WTC11 (cell line): ENCODE measurements at regions of chr4 and their contacts with region 1.

Region 1: DNA sequence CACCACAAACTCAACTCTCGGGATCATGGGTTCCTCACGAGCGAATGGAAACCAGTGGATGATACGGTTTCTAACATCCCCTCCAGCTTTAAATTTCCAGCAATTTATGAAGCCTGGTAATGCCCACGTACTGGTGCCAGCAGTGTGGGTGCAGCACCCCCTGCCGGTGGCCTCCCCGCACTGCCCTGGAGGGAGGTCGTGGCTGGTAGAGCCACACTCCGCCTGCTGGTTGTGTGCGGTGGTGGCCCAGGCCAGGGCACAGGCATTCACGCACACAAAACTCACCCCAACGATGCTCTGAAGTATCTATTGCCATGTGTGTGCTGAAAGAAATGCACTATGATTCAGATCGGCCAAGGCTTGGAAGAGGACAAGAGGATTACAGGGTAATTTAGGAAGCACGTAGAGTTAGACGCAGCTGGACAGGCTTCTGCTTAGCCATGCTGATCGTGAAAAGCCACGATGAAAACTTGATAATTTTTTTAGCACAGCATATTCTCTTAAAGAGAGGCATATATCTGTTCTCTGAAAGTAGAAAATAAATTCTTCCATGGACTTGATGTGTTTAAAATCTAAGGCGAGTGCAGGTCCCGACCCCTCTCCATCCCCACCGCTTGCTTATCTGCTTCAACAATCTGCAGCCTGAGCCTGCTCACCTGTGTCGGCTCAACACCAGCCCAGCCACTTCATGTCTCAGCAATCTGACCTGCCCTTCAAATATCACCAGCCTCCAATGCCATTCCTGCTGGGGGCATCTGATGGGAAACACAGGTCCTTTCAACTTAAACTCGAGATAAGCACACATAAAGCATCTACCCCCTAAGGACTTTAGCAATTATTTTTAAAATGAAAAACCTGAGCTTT is 59.0 kb downstream of the SCD5 start:
- DNase-seq: peak; percentile 94
- ATAC-seq: peak; percentile 98
- H3K4me3 Mint-ChIP-seq: peak overlapping the region; percentile 36; the same call in 1 of the 2 replicates
- H3K27ac Mint-ChIP-seq: no peak overlapping the region
- H3K4me1 Mint-ChIP-seq: peaks cover 5% of the 10 kb centered on the region
- H3K27me3 Mint-ChIP-seq: no peaks in the 10 kb centered on the region
- CTCF ChIP-seq: peak; percentile 100

Region 2: DNA sequence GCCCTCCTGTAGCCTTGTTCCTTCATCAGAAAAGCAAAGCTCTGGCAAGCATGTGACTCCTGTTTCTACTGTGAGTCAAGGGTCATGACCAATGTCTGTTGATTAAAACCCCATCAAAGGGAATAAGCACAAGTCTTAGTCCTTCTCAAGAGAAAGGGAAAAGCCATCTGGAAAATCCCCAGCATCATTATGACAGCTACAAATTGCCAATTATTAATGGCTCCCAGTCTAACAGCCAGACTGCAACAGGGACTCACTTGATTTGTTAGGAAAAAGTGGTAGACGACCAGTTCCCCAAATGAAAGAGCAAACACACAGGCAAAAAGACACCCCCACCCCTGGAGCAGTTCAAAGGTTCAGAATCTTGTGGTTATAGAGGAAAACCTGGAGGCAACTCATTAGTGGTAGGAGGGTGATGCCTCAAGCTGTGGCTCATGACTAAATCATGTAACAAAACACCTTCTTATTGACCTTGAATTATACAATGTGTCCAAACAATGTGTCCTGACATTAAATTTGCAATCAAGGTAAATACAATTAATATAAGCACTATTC is 681.5 kb before region 1 on chr4:
- CTCF ChIA-PET with region 1: no interaction called
- POLR2A ChIA-PET with region 1: no interaction called
- DNase-seq: no peak
- ATAC-seq: no peak
- H3K4me3 Mint-ChIP-seq: no peak overlapping the region
- H3K27ac Mint-ChIP-seq: no peak overlapping the region
- H3K4me1 Mint-ChIP-seq: peaks cover 2% of the 10 kb centered on the region; the same call in 1 of the 2 replicates
- H3K27me3 Mint-ChIP-seq: no peaks in the 10 kb centered on the region
- CTCF ChIP-seq: no peak

Region 3: DNA sequence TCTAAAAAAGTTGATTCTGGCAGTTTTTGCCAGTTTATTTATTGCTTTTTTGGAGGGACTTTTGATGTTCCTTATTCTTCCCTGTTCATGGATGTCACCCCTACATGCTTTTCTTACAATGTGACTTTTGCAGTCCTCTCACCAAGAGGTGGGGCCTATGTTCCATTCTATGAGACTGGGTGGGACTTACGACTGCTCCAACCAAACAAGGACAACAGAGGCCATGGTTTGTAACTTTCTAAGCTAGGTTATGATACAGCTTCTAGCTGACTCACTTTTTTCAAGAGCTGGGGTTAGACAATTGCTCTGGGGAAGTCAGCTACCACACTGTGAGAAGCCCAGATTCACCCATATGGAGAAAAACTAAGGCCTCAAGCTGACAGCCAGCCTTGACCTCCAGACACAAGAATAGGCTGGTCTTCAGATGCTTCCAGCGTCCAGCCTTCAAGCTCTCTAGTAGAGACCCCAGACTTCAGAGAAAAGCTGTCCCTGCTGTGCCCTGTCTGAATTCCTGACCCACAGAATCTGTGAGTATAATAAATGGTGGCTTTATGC is 269.7 kb before region 1 on chr4:
- CTCF ChIA-PET with region 1: interaction called, 12 read pairs
- POLR2A ChIA-PET with region 1: no interaction called
- DNase-seq: no peak
- ATAC-seq: peak; percentile 68
- H3K4me3 Mint-ChIP-seq: no peak overlapping the region
- H3K27ac Mint-ChIP-seq: no peak overlapping the region
- H3K4me1 Mint-ChIP-seq: peaks cover 2% of the 10 kb centered on the region
- H3K27me3 Mint-ChIP-seq: no peaks in the 10 kb centered on the region
- CTCF ChIP-seq: no peak

Region 4: DNA sequence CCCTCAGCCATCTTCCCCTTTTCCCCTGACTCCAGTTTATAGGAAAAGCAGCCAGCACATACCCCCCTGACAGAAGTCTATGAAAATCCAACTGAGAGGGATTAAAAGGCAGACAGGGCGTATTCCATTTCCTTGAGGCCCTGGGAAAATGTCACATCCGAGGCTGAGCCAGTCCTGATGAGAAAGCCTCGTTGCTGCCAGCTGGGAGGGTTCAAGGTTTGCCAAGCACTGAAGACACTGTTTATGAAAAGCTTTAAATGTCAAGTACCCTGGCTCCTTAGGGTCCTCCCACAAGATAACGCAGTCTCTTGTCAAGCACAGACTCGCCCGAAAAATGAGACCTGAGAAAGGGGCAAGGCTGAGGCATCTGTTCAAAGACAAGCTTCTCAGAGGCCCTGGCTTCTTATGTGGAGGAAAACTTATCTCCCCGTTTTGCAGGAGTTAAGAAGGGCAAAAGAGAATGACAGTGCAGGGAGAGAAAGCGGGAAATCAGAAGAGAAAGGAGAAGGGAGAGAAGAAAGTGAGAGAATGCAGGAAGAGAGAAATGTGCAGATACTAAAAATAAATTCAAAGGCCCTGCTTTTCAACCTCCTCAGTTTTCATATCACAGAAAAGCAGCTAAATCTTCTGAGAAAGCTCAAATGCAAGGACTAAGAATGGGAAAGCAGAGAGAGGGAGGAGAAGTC is 14.3 kb after region 1 on chr4:
- CTCF ChIA-PET with region 1: interaction called, 17 read pairs
- POLR2A ChIA-PET with region 1: no interaction called
- DNase-seq: no peak
- ATAC-seq: no peak
- H3K4me3 Mint-ChIP-seq: no peak overlapping the region
- H3K27ac Mint-ChIP-seq: no peak overlapping the region
- H3K4me1 Mint-ChIP-seq: peaks cover 5% of the 10 kb centered on the region
- H3K27me3 Mint-ChIP-seq: no peaks in the 10 kb centered on the region
- CTCF ChIP-seq: no peak

Region 5: DNA sequence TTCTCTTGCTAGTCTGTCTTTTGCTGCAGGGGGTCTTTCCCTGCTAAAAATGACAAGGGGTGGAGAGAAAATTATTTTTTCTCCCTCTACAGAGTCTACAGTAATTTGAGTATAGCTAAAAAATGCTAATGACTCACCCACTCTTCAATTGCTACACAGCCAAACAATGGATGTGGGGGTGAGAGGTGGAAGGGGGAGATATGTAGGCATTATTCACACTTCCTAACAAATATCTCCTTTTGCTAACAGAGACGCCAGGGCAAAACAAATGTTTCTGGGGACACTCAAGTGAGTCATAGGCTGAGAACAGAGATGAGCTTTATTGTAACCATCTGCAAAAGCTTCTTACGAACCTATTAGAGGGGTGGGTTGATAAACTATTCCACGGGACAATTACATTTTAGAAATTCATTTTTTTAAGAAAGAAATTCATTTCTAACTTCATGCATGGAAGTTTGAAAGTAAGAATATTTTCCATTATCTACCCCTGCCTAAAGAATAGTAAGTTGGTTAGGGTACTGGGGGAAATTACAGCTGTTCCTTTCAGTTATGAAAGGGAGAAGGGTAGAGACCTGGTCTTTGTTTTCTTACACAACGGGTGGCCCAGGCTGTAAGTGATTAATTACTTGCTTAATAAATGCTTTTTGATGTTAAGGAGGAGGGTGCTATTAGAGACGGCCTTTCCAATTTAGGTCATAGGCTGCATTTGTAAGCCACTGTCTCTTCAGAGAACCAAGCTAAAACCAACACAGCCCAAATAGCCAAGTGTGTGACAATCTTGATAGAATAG is 46.3 kb after region 1 on chr4:
- CTCF ChIA-PET with region 1: interaction called, 13 read pairs
- POLR2A ChIA-PET with region 1: no interaction called
- DNase-seq: no peak
- ATAC-seq: no peak
- H3K4me3 Mint-ChIP-seq: no peak overlapping the region
- H3K27ac Mint-ChIP-seq: no peak overlapping the region
- H3K4me1 Mint-ChIP-seq: peaks cover 46% of the 10 kb centered on the region
- H3K27me3 Mint-ChIP-seq: peaks cover 100% of the 10 kb centered on the region
- CTCF ChIP-seq: no peak

Region 6: GRCh38 chr4:83022724-83023450 is 283.3 kb after region 1 on chr4:
- CTCF ChIA-PET with region 1: no interaction called
- POLR2A ChIA-PET with region 1: no interaction called
- DNase-seq: no peak
- ATAC-seq: no peak
- H3K4me3 Mint-ChIP-seq: no peak overlapping the region
- H3K27ac Mint-ChIP-seq: no peak overlapping the region
- H3K4me1 Mint-ChIP-seq: no peaks in the 10 kb centered on the region
- H3K27me3 Mint-ChIP-seq: peaks cover 39% of the 10 kb centered on the region
- CTCF ChIP-seq: no peak